ENCODE measurements at regions of chr7 and their contacts with region 1.

Region 1: GRCh38 chr7:41940760-41941343 is 238.0 kb upstream of the INHBA start:
- DNase-seq: no peak
- H3K4me3 ChIP-seq: no peak overlapping the region
- H3K27ac ChIP-seq: no peak overlapping the region
- H3K27me3 ChIP-seq: no peaks in the 10 kb centered on the region
- CTCF ChIP-seq: peak; percentile 95

Region 2: GRCh38 chr7:40232242-40232893 is 1708.5 kb before region 1 on chr7:
- CTCF ChIA-PET with region 1: interaction called, 13 read pairs
- POLR2A ChIA-PET with region 1: no interaction called
- DNase-seq: peak; percentile 29
- H3K4me3 ChIP-seq: no peak overlapping the region
- H3K27ac ChIP-seq: no peak overlapping the region
- H3K27me3 ChIP-seq: no peaks in the 10 kb centered on the region
- CTCF ChIP-seq: peak; percentile 66

Region 3: GRCh38 chr7:41603985-41604384 is 336.9 kb before region 1 on chr7:
- CTCF ChIA-PET with region 1: no interaction called
- POLR2A ChIA-PET with region 1: no interaction called
- DNase-seq: no peak
- H3K4me3 ChIP-seq: no peak overlapping the region
- H3K27ac ChIP-seq: no peak overlapping the region
- H3K27me3 ChIP-seq: no peaks in the 10 kb centered on the region
- CTCF ChIP-seq: no peak

Region 4: DNA sequence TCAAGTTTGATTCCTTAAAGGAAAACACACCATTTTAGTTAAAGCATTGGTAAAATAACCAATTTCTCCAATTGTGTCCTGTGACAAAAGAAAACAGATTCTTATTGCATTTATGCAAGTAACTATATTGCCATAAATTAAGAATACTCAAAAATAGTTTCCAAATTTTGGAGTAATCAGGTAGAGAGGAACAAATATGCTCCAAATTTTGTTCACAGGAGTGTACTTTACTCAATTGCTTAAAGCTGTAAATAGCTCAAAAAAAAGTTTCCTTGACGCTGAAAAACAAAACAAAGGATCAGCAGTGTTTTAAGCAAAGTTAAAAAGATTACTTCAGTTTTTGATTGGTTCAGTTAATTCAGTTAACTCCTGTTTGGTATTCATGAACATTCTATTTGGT is 185.8 kb before region 1 on chr7:
- CTCF ChIA-PET with region 1: no interaction called
- POLR2A ChIA-PET with region 1: no interaction called
- DNase-seq: no peak
- H3K4me3 ChIP-seq: no peak overlapping the region
- H3K27ac ChIP-seq: no peak overlapping the region
- H3K27me3 ChIP-seq: no peaks in the 10 kb centered on the region
- CTCF ChIP-seq: no peak

Region 5: DNA sequence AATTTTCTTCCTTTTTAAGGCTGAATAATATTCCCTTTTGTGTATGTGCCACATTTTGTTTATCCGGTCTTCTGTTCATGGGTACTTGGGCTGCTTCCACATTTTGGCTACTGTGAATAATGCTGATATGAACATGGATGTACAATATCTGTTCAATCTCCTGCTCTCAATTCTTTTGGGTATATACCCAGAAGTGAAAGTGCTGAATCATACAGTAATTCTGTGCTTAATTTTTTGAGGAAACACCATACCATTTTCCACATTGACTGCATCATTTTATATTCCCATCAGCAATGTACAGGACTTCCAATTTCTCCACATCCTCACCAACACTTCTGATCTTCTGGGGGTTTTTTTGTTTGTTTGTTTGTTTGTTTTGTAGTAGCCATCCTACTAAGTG is 102.9 kb before region 1 on chr7:
- CTCF ChIA-PET with region 1: no interaction called
- POLR2A ChIA-PET with region 1: no interaction called
- DNase-seq: no peak
- H3K4me3 ChIP-seq: no peak overlapping the region
- H3K27ac ChIP-seq: no peak overlapping the region
- H3K27me3 ChIP-seq: no peaks in the 10 kb centered on the region
- CTCF ChIP-seq: no peak

Region 6: DNA sequence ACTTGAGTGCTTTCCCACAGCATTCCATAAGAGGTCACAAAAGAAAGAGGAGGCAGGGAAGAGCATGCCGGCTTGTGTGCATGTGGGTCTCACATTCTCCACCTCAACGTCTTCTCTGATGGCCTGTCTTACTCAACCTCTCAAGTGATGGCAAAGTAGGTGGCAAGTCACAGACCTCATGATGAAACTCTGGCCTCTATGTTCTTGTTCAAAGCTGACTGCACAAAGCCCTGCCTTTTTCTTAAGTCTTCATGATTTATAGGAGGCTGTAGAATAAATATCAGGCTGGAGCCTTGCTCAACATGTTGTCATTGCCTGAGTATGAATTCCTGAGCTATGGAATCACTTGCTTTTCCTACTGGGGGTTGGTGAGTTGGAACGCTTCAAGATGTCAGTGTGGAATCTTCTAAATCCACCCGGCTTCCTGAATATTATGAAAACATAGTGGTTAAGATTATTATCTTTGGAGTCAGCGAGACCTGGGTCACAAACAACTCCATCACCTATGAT is 24.3 kb before region 1 on chr7:
- CTCF ChIA-PET with region 1: interaction called, 15 read pairs
- POLR2A ChIA-PET with region 1: no interaction called
- DNase-seq: peak; percentile 93
- H3K4me3 ChIP-seq: no peak overlapping the region
- H3K27ac ChIP-seq: peak overlapping the region; percentile 97
- H3K27me3 ChIP-seq: no peaks in the 10 kb centered on the region
- CTCF ChIP-seq: no peak

Region 7: GRCh38 chr7:41955893-41956675 is 15.2 kb after region 1 on chr7:
- CTCF ChIA-PET with region 1: interaction called, 100 read pairs
- POLR2A ChIA-PET with region 1: interaction called, 9 read pairs
- DNase-seq: peak; percentile 99
- H3K4me3 ChIP-seq: peak overlapping the region; percentile 39
- H3K27ac ChIP-seq: peak overlapping the region; percentile 80
- H3K27me3 ChIP-seq: no peaks in the 10 kb centered on the region
- CTCF ChIP-seq: no peak

Region 8: DNA sequence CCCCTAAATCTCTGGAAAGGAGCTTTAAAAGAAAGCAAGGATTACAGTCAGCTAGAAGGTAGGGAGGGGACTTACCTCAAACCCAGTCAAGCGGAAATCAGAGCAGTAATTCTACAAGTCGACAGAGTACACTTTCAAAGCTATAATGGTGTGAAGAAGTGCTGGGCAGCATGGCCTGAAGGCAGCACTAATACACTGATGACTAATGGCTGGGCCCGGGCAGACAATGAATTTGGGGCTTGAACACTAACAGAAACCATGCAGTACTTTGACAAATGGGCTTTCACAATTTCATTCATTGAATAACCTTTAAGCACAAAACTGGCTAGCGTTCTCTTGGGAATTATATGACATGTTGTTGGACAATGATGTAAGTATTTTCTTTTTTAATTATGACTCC is 291.4 kb after region 1 on chr7:
- CTCF ChIA-PET with region 1: interaction called, 13 read pairs
- POLR2A ChIA-PET with region 1: no interaction called
- DNase-seq: no peak
- H3K4me3 ChIP-seq: no peak overlapping the region
- H3K27ac ChIP-seq: no peak overlapping the region
- H3K27me3 ChIP-seq: no peaks in the 10 kb centered on the region
- CTCF ChIP-seq: no peak

Region 9: GRCh38 chr7:42831718-42832431 is 891.0 kb after region 1 on chr7:
- CTCF ChIA-PET with region 1: interaction called, 30 read pairs
- POLR2A ChIA-PET with region 1: interaction called, 3 read pairs
- DNase-seq: no peak
- H3K4me3 ChIP-seq: no peak overlapping the region
- H3K27ac ChIP-seq: no peak overlapping the region
- H3K27me3 ChIP-seq: peaks cover 3% of the 10 kb centered on the region
- CTCF ChIP-seq: peak; percentile 75

Region 10: DNA sequence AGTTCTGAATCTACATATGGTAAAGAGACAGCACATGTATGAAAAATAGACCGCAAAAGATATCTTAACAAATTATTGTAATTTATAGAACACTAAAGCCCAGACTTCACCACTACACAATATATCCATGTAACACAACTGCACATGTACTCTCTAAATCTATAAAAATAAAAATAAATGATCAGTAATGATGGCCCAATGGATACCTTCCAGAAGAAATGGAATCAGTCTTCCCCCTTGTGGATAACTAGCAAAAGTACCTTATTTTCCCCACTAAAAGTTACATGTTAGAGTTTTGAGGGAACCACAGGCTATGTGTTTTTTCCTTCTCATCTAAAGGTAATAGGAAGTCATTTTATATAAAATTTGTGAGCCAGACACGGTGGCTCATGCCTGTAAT is 945.3 kb after region 1 on chr7:
- CTCF ChIA-PET with region 1: interaction called, 88 read pairs
- POLR2A ChIA-PET with region 1: no interaction called
- DNase-seq: no peak
- H3K4me3 ChIP-seq: no peak overlapping the region
- H3K27ac ChIP-seq: no peak overlapping the region
- H3K27me3 ChIP-seq: peaks cover 17% of the 10 kb centered on the region
- CTCF ChIP-seq: peak; percentile 56